Activated CD8-positive, alpha-beta memory T cell treated with anti-CD3 and anti-CD28 coated beads, Interleukin-2, amount 10 ng/mL, durations not matched to agents 7 days and 5 days (primary cell): ENCODE measurements at regions of chr5 and their contacts with region 1.

Region 1: DNA sequence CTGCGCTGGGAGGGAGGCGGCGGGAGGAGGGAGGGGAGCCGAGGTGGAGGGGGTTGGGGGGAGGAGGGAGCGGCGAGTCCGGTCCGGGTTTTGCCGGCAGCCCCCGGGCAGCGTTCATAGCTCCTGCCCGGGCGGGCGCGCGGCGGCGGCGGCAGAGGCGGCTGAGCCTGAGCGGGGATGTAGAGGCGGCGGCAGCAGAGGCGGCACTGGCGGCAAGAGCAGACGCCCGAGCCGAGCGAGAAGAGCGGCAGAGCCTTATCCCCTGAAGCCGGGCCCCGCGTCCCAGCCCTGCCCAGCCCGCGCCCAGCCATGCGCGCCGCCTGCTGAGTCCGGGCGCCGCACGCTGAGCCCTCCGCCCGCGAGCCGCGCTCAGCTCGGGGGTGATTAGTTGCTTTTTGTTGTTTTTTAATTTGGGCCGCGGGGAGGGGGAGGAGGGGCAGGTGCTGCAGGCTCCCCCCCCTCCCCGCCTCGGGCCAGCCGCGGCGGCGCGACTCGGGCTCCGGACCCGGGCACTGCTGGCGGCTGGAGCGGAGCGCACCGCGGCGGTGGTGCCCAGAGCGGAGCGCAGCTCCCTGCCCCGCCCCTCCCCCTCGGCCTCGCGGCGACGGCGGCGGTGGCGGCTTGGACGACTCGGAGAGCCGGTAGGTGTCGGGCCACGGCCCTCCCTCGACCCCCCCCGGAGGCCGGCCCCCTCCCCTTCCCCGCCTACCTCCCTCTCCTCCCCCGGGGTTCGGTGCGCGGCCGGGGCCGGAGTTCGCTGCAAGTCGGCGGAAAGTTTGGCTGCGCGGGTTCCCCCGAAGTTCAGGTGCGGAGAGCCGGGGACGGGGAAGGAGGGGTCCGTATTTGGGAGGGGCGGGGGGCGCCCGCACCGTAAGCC is at the start of gene CXXC5:
- DNase-seq: peak; percentile 66
- ATAC-seq: peak; percentile 59
- H3K4me3 Mint-ChIP-seq: peak within 1 kb of the TSS; percentile 57
- H3K27ac Mint-ChIP-seq: no peak within 1 kb of the TSS
- H3K4me1 Mint-ChIP-seq: peaks cover 54% of the 10 kb centered on the region
- H3K27me3 Mint-ChIP-seq: peaks cover 66% of the 10 kb centered on the region
- total RNA-seq, gene CXXC5: 1.8 to 4.1 TPM

Region 2: DNA sequence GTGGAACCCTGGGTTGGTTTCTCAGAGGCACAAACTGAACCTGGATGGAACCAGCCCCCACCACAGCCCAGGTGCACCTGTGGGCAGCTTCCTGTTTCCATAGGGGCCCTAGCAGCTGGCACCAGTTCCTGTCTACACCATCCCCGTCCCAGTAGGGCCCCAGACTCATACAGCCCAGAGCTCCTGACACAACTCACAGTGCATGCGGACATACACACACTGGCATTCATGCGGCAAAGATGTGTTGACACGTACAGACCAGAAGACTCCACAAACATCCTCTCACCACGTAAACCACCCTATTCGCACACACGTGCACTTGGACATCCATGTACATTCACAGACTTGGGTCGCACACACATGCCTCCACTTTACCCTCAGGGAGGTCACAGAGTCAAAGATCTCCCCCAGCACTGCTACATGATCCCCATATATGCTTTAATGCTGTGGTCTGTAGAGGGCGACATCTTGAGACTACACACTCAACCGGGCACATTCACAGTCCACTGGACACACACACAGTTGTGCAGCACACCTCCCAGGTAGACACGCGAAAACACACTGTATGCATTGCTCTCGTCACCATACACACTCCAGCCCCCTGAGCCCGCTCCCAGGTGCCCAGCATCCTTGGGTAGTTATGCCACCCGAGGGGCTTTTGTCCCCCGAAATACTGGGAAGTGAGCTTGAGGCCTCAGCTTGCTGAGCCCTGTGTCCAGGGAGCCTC is 22.1 kb after region 1 on chr5:
- CTCF ChIA-PET with region 1: interaction called, 11 read pairs
- DNase-seq: peak; percentile 66
- ATAC-seq: peak; percentile 35
- H3K4me3 Mint-ChIP-seq: peak overlapping the region; percentile 81
- H3K27ac Mint-ChIP-seq: peak overlapping the region; percentile 80
- H3K4me1 Mint-ChIP-seq: peaks cover 45% of the 10 kb centered on the region
- H3K27me3 Mint-ChIP-seq: no peaks in the 10 kb centered on the region